ENCODE measurements at regions of chr19 and their contacts with region 1.

Region 1: DNA sequence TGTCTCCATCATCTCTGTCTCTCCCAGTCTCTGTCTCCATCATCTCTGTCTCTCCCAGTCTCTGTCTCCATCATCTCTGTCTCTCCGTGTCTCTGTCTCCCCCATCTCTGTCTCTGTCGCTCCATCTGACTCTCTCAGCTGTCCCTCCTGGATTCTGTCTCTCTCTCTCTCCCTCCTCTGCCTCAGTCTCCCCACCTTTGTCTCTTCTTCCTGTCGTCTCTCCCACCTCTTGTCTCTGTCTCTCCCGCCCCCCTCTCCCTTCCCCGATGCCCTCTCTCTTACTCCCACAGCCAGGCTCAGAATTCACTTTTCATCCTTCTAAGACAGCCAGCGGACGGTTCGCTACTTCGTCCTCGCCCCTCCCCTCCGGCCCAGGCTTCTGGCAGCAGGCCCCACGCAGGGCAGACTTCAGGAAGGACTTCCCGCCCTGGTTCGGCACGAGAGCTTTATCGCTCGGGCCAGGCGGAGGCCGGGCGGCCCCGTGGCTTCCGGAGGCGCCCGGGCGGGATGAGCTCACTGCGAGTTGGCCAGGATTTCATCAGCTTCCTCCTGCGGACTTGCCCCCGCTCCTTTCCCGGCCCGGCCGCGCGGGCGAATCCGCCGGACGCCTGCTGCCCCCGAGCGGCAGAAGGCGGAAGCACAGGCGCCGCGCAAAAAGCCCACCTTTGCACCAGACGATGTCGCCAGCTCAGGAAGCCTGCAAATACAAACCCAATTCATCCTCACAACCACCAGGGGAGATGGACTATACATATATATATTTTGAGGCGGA is 12.4 kb upstream of the CCDC9 start:
- DNase-seq: peak; percentile 91 to 96 (median 93)
- H3K4me3 ChIP-seq: peak overlapping the region in 1 of 4 donors; percentile 28
- H3K27ac ChIP-seq: peak overlapping the region in 3 of 5 donors; percentile 42 to 73 (median 68)
- H3K4me1 ChIP-seq: peaks cover 10 to 38% of the 10 kb centered on the region in 2 donors
- H3K27me3 ChIP-seq: peaks cover 8% of the 10 kb centered on the region
- CTCF ChIP-seq: peak; percentile 97 to 99 (median 98)
- POLR2A ChIP-seq: no peak

Region 2: GRCh38 chr19:47145639-47146486 is 98.1 kb before region 1 on chr19:
- intact Hi-C with region 1: loop called in 1 of 2 experiments (anchors 5 kb)
- DNase-seq: no peak
- H3K4me3 ChIP-seq: no peak overlapping the region
- H3K27ac ChIP-seq: no peak overlapping the region
- H3K4me1 ChIP-seq: peaks cover 7 to 12% of the 10 kb centered on the region in 2 donors
- H3K27me3 ChIP-seq: no peaks in the 10 kb centered on the region
- CTCF ChIP-seq: no peak
- POLR2A ChIP-seq: no peak

Region 3: DNA sequence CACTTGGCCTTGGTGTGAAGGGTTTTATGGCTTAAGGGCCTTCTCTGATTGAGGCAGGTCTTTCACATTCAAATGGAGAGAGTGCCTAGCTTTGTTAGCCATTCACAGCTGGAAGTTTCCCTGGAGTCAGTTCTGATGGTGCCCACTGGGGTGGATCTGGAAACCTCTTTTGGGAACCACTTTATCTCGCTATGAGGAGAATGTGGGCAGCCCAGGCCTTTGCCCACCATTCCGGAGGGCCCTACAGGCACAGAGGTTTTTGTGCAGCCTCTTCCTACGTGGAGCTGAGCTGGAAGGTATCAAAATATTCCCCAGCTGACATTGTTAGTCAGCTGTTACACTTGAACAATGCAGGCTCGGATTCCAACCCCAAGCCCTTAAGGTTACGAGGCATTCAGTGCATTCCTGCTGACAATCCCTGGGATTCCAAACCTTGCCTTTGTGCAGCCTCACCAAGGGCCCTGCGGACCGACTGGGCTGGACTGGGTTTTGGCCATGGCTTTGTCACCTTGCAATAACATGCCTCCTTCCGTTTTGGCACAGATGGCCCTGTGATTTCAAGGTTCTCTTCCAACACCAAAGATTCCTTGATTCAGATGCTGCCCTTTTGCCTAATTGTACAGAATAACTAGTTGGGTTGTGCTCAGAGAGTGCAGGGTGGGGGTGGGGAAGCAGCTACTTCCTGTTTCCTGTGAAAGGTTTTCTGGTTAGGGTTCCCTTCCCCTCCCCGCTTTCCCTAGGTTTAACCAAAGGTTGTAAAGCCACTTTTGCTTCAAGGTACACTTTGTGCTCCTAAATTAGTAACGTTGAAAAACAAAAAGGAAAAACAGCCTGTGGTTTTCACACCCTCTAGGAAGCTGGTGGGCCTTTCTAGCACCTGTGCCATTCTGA is 86.3 kb before region 1 on chr19:
- intact Hi-C with region 1: loop called in 1 of 2 experiments (anchors 5 kb)
- DNase-seq: peak; percentile 26 to 65 (median 47)
- H3K4me3 ChIP-seq: peak overlapping the region in 1 of 4 donors; percentile 7
- H3K27ac ChIP-seq: peak overlapping the region; percentile 38 to 85 (median 69)
- H3K4me1 ChIP-seq: peaks cover 15 to 26% of the 10 kb centered on the region in 2 donors
- H3K27me3 ChIP-seq: no peaks in the 10 kb centered on the region
- CTCF ChIP-seq: peak in 1 of 6 experiments; percentile 12
- POLR2A ChIP-seq: no peak

Region 4: DNA sequence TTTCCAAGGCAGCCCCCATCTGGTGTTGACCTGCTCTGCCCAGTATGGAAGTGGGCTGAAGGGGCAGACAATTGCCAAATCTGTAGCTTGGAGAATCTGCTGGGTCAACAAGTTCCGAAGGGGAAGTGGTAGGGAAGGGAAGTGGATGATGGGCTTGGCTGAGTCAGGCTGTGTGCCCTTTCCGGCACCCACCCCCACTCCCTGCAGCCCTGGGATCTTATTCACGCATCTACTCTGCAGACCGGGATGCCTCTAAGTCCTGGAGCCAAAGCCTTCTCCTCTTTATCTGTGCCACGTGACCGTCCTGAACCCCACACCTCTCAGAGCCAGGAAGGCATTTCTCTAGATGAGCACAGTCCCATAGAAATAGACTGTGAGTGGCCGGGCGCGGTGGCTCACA is 80.5 kb after region 1 on chr19:
- intact Hi-C with region 1: no loop called
- DNase-seq: peak in 6 of 7 donors; percentile 52 to 69 (median 61)
- H3K4me3 ChIP-seq: no peak overlapping the region
- H3K27ac ChIP-seq: peak overlapping the region in 4 of 5 donors; percentile 59 to 86 (median 69)
- H3K4me1 ChIP-seq: no peaks in the 10 kb centered on the region
- H3K27me3 ChIP-seq: no peaks in the 10 kb centered on the region
- CTCF ChIP-seq: no peak
- POLR2A ChIP-seq: no peak

Region 5: GRCh38 chr19:47469363-47469700 is 225.4 kb after region 1 on chr19:
- intact Hi-C with region 1: no loop called
- DNase-seq: no peak
- H3K4me3 ChIP-seq: no peak overlapping the region
- H3K27ac ChIP-seq: no peak overlapping the region
- H3K4me1 ChIP-seq: peaks cover 0 to 4% of the 10 kb centered on the region in 2 donors
- H3K27me3 ChIP-seq: peaks cover 26% of the 10 kb centered on the region
- CTCF ChIP-seq: no peak
- POLR2A ChIP-seq: no peak